ENCODE measurements at regions of chr11 and their contacts with region 1.

Region 1: DNA sequence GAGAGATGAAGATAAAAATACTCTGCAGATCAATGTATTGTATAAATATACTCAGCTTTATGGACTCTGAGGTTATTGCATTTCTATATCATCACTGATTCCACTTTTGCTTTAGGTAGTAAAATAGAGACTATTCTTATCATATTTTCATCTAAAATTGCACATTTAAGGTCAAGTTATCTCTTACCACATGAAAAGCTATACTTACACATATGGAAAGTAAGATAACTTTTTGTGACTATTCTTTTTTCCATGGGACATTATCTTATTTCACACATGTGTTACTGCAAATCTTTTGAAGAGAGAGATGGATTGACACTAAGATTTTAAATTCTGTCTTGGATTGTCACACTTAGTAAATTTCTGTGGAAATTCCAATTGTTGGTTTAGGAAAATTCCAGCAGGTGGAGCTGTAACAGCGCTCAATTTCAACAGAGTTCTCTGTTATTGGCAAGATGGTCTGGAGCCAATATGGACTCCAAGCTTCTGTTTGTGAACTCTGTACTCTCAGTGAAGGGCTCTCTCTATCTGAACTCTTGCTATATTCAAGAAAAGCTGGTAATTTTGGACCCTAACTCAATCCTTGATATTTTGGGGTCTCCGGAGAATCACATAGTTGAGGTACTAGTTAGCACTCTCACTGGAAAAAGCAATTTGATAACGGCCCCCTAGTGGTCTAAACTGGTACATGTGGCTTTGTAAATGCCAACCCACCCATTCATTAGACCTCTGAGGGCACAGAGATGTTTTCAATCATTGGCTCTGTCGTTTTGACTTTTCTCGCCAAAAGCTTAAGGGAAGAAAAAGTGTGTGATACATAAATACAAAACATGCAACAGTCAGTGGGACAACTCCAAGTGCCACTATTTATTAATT is 429.7 kb downstream of the ETS1 start:
- DNase-seq: peak; percentile 87
- H3K4me3 ChIP-seq: peak overlapping the region in 1 of 3 experiments; percentile 48
- H3K27ac ChIP-seq: peak overlapping the region; percentile 75
- H3K4me1 ChIP-seq: peaks cover 16% of the 10 kb centered on the region
- H3K27me3 ChIP-seq: no peaks in the 10 kb centered on the region
- CTCF ChIP-seq: peak; percentile 66 to 86
- POLR2A ChIP-seq: no peak

Region 2: GRCh38 chr11:126440792-126441514 is 1716.7 kb before region 1 on chr11:
- CTCF ChIA-PET with region 1: interaction called, 19 read pairs
- POLR2A ChIA-PET with region 1: no interaction called
- dilution Hi-C with region 1: no loop called
- intact Hi-C with region 1: loop called (anchors 1 kb)
- DNase-seq: peak; percentile 74
- H3K4me3 ChIP-seq: no peak overlapping the region
- H3K27ac ChIP-seq: no peak overlapping the region
- H3K4me1 ChIP-seq: no peaks in the 10 kb centered on the region
- H3K27me3 ChIP-seq: no peaks in the 10 kb centered on the region
- CTCF ChIP-seq: peak; percentile 84 to 88
- POLR2A ChIP-seq: no peak

Region 3: GRCh38 chr11:127843483-127844396 is 313.9 kb before region 1 on chr11:
- CTCF ChIA-PET with region 1: no interaction called
- POLR2A ChIA-PET with region 1: no interaction called
- dilution Hi-C with region 1: no loop called
- intact Hi-C with region 1: no loop called
- DNase-seq: peak; percentile 54
- H3K4me3 ChIP-seq: no peak overlapping the region
- H3K27ac ChIP-seq: no peak overlapping the region
- H3K4me1 ChIP-seq: no peaks in the 10 kb centered on the region
- H3K27me3 ChIP-seq: no peaks in the 10 kb centered on the region
- CTCF ChIP-seq: peak; percentile 74 to 75
- POLR2A ChIP-seq: no peak

Region 4: GRCh38 chr11:127925475-127925874 is 232.2 kb before region 1 on chr11:
- CTCF ChIA-PET with region 1: no interaction called
- POLR2A ChIA-PET with region 1: no interaction called
- dilution Hi-C with region 1: no loop called
- intact Hi-C with region 1: no loop called
- DNase-seq: no peak
- H3K4me3 ChIP-seq: no peak overlapping the region
- H3K27ac ChIP-seq: no peak overlapping the region
- H3K4me1 ChIP-seq: no peaks in the 10 kb centered on the region
- H3K27me3 ChIP-seq: no peaks in the 10 kb centered on the region
- CTCF ChIP-seq: no peak
- POLR2A ChIP-seq: no peak

Region 5: GRCh38 chr11:127943763-127944162 is 213.9 kb before region 1 on chr11:
- CTCF ChIA-PET with region 1: no interaction called
- POLR2A ChIA-PET with region 1: no interaction called
- dilution Hi-C with region 1: no loop called
- intact Hi-C with region 1: no loop called
- DNase-seq: no peak
- H3K4me3 ChIP-seq: no peak overlapping the region
- H3K27ac ChIP-seq: no peak overlapping the region
- H3K4me1 ChIP-seq: no peaks in the 10 kb centered on the region
- H3K27me3 ChIP-seq: no peaks in the 10 kb centered on the region
- CTCF ChIP-seq: no peak
- POLR2A ChIP-seq: no peak

Region 6: DNA sequence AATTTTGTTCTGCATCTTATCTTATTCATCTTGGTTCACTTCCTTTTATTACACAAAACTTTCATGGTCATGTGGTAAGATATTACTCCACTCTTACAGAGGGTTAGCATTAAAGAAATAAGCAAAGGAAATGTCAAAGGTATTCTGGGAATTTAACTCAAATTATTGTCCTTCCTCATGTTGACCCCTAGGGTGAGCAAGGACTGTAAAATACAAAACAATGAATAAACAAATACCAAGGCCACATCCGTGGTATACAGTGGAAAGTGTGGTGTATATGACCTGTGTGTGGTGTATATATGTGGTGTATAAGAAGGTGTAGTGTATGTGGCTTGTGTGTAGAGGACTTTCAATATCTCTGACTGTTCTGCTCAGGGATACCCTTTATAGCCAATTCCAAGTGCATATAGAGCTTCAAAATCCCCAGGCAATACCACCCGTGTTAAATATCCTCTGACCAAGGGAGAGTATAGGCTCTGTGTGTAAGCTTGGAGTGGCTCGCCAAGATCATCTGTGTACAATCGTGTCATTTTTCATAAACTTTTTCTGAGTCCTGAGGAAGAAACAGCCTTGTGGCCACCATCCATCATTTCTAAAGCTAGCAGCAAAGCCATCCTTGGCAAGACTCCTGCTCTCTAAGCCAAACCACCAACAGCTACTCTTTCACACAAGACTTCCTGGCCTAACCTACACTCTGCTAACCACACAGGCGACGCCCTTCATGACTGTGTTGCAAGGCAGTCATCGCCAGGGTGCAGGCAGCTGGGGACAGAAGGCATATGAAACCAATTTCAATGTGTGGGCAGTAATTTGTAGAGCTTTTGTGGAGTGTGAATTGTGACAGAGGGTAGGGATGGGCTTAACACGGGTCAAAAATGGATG is 118.3 kb before region 1 on chr11:
- CTCF ChIA-PET with region 1: interaction called, 32 read pairs
- POLR2A ChIA-PET with region 1: no interaction called
- dilution Hi-C with region 1: loop called (anchors 25 kb)
- intact Hi-C with region 1: no loop called
- DNase-seq: peak; percentile 74
- H3K4me3 ChIP-seq: no peak overlapping the region
- H3K27ac ChIP-seq: no peak overlapping the region
- H3K4me1 ChIP-seq: peaks cover 14% of the 10 kb centered on the region
- H3K27me3 ChIP-seq: no peaks in the 10 kb centered on the region
- CTCF ChIP-seq: no peak
- POLR2A ChIP-seq: no peak

Region 7: GRCh38 chr11:128052912-128053641 is 104.6 kb before region 1 on chr11:
- CTCF ChIA-PET with region 1: interaction called, 8 read pairs
- POLR2A ChIA-PET with region 1: no interaction called
- dilution Hi-C with region 1: loop called (anchors 25 kb)
- intact Hi-C with region 1: loop called (anchors 5 kb)
- DNase-seq: peak; percentile 72
- H3K4me3 ChIP-seq: no peak overlapping the region
- H3K27ac ChIP-seq: peak overlapping the region; percentile 79
- H3K4me1 ChIP-seq: peaks cover 21% of the 10 kb centered on the region
- H3K27me3 ChIP-seq: no peaks in the 10 kb centered on the region
- CTCF ChIP-seq: no peak
- POLR2A ChIP-seq: no peak

Region 8: GRCh38 chr11:128146926-128147605 is 10.6 kb before region 1 on chr11:
- CTCF ChIA-PET with region 1: interaction called, 27 read pairs
- POLR2A ChIA-PET with region 1: no interaction called
- dilution Hi-C with region 1: no loop called
- intact Hi-C with region 1: no loop called
- DNase-seq: peak; percentile 50
- H3K4me3 ChIP-seq: no peak overlapping the region
- H3K27ac ChIP-seq: no peak overlapping the region
- H3K4me1 ChIP-seq: no peaks in the 10 kb centered on the region
- H3K27me3 ChIP-seq: no peaks in the 10 kb centered on the region
- CTCF ChIP-seq: no peak
- POLR2A ChIP-seq: no peak

Region 9: DNA sequence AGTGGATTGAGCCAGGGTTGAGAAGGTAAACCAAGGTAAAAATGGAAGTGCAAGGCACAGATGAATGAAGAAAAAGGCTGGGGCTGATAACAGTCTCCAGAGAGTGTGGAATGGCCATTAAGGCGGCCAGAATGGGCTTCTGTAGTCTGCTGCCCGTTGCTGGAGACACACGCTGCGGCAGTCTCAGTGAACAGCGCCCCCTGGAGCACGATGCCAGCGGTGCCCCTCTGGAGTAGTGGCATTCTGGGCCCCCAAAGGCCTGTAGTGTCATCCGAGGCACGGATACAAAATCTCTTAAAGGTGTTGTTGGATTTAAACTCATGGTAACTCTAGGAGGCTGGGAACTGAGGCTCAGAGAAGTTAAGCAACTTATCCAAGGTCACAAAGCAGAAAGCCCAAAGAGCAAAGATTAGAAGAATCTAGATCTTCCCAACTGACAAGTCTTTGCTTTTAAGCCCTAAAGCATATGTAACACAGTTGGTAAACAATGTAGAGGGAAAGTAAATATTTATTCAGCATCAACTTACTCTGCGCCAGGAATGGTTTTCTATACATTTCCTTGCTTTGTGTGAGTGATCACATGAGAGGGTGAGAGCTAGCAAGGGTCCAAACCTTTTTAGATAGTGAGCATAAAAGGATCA is 691.3 kb after region 1 on chr11:
- CTCF ChIA-PET with region 1: interaction called, 12 read pairs
- POLR2A ChIA-PET with region 1: no interaction called
- dilution Hi-C with region 1: no loop called
- intact Hi-C with region 1: loop called (anchors 1 kb)
- DNase-seq: peak; percentile 72
- H3K4me3 ChIP-seq: no peak overlapping the region
- H3K27ac ChIP-seq: no peak overlapping the region
- H3K4me1 ChIP-seq: peaks cover 4% of the 10 kb centered on the region
- H3K27me3 ChIP-seq: no peaks in the 10 kb centered on the region
- CTCF ChIP-seq: peak; percentile 94 to 97
- POLR2A ChIP-seq: no peak

Measured in endothelial cell of umbilical vein (primary cell).